ENCODE measurements at regions of chr5 and their contacts with region 1.

Region 1: DNA sequence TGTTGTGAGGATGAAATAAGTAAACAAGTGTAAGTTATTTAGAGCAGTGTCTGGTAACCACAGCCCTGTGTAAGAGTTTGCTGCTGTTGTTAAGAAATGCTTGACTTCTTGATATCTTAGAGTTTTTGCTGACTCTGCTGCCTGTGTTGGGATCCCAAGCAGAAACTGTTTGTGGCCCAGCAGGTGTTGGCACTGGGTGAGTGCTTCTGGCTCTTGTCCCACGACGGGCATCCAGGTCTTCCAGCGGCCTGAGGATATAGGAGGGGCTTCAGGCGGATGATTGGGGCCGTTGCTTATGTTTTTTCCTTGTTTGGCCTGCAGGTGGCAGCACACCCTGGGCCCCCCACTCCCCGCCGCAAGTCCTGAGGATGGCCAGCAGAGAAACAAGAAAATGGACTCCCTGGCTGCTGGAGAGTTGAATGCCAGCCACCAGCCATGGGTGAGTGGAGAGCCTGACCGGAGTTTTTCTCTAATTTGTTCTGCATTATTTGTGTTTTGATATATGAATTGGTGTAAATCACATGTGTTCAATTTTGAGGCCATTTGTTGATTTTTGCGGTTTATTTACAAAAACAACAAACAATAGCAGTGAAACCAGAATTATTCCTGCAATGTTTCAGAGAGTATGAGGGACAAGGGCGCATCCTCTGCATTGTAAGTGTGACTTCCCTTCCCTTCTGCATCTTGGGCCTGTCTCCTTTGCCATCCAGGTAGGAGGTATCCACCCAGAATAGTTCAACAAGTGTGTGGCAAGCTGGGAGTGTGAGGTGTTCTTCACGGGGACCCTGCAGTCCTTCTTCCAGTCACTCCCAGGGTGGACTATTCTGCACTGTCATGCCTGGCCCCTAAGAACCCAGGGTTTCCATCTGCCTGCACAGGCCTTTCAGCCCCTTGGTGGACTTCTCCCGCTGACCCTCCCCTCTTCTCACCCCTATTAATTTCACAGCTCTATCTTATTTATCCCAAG is 50.3 kb downstream of the SLC22A5 start:
- DNase-seq: peak in 1 of 2 donors; percentile 93
- H3K4me3 ChIP-seq: no peak overlapping the region
- CTCF ChIP-seq: peak in 1 of 3 donors; percentile 91
- POLR2A ChIP-seq: no peak

Region 2: DNA sequence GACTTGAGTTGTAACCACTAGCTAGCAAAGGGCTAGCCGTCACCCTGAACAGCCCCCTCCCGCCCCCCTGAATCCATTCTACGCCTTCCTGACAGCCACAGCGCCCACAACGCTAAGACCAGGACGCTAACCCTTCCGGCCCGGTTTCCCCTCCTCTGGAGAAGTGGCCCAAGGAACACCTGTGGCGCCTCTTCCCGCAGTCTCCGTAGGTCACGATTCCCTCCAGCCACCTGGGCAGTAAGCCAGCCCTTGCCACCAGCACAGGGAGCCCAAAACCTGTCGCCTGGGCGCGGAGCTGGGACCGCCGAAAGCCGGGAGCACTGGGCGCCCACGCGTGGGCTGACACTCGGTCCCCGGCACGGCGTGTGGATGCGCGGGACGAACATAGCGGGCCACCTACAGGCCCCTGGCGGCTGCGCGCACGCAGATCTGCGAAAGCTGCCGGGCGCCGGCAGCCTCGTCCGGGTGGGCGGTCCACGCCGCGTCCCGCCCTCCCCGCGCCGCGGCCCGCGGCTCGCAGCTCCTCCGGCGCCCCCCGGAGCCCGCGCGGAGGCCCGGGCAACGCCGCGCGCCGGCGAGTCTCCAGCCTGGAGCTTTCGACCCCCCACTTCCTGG is 70.2 kb after region 1 on chr5:
- intact Hi-C with region 1: loop called (anchors 5 kb)
- DNase-seq: peak; percentile 23 to 91
- H3K4me3 ChIP-seq: peak overlapping the region; percentile 67
- CTCF ChIP-seq: no peak
- POLR2A ChIP-seq: no peak

Measured in lower leg skin (tissue), 4 donors.